Psoas muscle (tissue), 8 donors: ENCODE measurements at regions of chr9 and their contacts with region 1.

Region 1: DNA sequence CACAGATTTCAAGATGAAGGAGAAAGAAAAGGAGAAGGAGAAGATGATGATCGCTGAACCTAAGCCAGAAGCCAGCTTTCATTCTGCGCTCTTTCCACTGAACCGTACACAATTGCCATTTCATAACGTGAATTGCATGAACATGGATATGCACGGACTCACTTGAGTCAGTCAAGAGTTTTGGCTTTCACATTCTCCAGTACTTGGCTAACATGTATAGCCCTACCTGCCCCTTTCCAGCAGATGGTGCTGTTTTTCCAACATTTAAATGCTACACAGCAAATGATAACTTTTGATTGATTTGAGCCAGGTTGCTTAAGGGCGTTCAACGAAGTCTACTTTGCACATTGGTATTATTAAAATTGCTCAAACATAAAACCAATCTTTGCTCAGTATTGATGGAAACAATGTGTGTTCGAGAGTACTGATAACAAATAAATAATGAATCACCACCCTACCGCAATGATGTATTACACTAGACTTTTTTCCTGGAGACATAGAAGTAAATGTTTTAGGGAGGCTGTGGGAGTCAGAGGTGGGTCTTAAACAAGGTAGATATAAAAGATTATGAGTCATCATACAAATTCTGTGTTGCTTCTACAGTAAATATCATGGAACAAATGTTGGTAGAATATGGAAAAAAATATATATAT is 196.4 kb downstream of the TRPM3 start:
- DNase-seq: no peak
- ATAC-seq: peak; percentile 63 to 95 (median 84)
- H3K4me3 ChIP-seq: peak overlapping the region; percentile 15
- H3K27ac ChIP-seq: no peak overlapping the region
- H3K4me1 ChIP-seq: no peaks in the 10 kb centered on the region
- H3K27me3 ChIP-seq: no peaks in the 10 kb centered on the region
- CTCF ChIP-seq: peak; percentile 70

Region 2: GRCh38 chr9:70852711-70853240 is 72.2 kb before region 1 on chr9:
- intact Hi-C with region 1: no loop called
- DNase-seq: no peak
- ATAC-seq: no peak
- H3K4me3 ChIP-seq: no peak overlapping the region
- H3K27ac ChIP-seq: no peak overlapping the region
- H3K4me1 ChIP-seq: no peaks in the 10 kb centered on the region
- H3K27me3 ChIP-seq: no peaks in the 10 kb centered on the region
- CTCF ChIP-seq: no peak

Region 3: DNA sequence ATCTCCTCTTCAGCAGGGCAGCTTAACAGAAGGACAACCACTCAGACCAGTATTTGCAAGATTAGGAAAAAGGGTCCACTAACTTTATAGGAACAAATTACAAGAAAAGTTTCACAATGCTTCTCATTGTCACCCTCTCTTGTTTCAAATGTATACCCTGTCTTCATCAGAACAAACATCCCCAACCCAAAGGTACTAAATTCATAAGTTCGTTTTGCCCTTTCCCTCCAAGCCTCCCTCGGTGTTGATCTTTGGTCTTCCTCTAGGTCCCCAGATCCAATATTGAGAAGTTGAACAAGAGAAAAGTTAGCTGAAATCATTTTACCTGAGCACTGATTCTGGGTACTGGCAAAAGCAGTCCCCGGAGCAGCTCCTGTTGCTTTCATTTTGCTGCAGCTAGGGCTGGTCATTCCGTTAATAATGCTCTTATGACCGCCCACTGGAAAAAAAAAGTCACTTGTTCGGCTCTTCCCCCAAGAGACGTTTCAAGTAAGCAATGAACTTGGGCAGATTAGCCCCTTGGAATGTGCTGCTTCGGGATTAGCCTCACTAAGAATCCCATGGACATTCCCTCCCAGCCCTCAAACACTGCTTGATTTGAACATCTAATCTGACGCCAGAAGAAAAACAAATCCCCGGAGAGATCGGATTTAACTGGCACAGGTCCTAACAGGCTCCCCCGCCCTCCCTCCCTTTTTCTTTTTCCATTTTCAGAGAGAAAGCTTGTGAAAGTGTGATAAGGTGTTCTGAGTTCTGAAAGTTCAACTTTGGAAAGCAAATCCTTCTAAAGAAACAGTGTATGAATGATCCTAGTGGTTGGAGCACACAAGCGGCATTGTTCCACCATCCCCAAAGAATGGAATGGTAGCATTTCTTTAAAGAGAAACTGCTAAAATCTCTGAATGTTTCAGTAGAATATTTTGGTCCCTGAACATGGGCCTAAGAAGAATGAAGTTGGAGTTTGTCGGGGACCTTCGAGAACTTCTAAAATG is 56.1 kb before region 1 on chr9:
- intact Hi-C with region 1: no loop called
- DNase-seq: no peak
- ATAC-seq: no peak
- H3K4me3 ChIP-seq: peak overlapping the region; percentile 52
- H3K27ac ChIP-seq: no peak overlapping the region
- H3K4me1 ChIP-seq: no peaks in the 10 kb centered on the region
- H3K27me3 ChIP-seq: peaks cover 0 to 4% (median 0%) of the 10 kb centered on the region in 3 donors
- CTCF ChIP-seq: no peak

Region 4: GRCh38 chr9:70883056-70883455 is 42.0 kb before region 1 on chr9:
- intact Hi-C with region 1: no loop called
- DNase-seq: no peak
- ATAC-seq: no peak
- H3K4me3 ChIP-seq: no peak overlapping the region
- H3K27ac ChIP-seq: no peak overlapping the region
- H3K4me1 ChIP-seq: no peaks in the 10 kb centered on the region
- H3K27me3 ChIP-seq: no peaks in the 10 kb centered on the region
- CTCF ChIP-seq: no peak

Region 5: DNA sequence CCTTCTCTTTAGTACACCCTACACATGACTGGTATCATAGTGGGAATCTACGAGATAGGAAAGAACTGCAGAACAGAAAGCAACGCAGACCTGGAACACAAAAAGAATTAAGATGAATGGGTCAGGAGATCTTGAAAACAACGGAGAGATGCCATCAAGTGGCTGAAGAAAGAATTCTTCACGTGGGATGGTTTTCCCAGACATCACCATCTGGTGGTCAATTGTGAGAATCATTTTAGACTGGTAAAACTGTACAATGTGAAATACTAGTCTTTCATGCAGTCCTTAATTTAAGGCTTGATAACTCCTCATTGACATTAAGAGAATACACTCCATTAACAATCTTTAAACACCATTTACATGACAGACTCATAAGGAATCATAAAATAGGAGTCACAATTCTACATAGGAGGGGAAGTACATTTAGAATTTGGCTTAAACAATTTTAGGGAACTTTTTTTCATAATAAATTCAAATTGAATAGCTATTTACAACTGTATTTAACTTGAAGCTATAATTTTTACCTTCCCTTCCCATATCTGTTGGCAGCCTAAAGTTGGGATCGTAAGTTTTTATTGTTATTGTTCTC is 324.8 kb after region 1 on chr9:
- intact Hi-C with region 1: loop called (anchors 10 kb)
- DNase-seq: no peak
- ATAC-seq: peak in 2 of 4 donors; percentile 38 to 78
- H3K4me3 ChIP-seq: no peak overlapping the region
- H3K27ac ChIP-seq: no peak overlapping the region
- H3K4me1 ChIP-seq: no peaks in the 10 kb centered on the region
- H3K27me3 ChIP-seq: no peaks in the 10 kb centered on the region
- CTCF ChIP-seq: peak; percentile 64